Posterior vena cava (tissue), 2 donors: ENCODE measurements at regions of chr4 and their contacts with region 1.

Region 1: GRCh38 chr4:170202721-170203120 is 113.0 kb upstream of the AADAT start:
- DNase-seq: no peak

Region 2: DNA sequence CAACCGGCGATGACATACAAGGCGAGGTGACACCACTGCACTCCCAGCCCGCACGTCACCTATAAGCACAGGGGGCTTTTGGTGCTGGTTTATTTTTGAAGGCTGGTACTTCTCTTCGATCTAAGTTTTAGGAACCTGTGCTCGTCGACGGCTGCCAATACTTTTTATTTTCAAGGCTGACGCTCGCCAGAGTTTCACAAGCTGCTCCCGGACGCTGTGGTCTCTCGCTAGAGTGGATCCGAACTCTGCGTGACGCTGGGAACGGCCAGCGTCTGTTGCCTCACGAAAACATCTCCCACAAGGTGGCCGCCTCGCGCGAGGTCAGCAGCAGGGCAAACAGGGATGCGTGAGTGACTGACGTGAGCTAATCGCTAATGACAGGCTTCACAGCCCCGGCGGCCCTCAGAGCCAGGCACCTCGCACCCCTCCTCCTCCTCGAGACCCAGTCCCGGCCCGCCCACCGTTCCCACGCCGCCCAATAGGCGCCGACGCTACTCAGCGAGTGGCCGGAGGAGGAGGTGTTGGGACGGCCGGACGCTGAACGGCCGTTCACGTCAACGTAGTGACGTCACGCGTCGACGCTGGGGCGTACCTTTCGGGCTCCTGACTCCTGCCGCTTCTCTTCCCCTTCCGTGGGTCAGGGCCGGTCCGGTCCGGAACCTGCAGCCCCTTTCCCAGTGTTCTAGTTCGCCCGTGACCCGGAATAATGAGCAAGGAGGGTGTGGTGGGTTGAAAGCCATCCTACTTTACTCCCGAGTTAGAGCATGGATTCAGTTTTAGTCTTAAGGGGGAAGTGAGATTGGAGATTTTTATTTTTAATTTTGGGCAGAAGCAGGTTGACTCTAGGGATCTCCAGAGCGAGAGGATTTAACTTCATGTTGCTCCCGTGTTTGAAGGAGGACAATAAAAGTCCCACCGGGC is 582.5 kb before region 1 on chr4 and contains the start of gene CLCN3:
- intact Hi-C with region 1: no loop called
- DNase-seq: peak; percentile 99
- total RNA-seq, gene CLCN3: 17.0 to 23.3 TPM

Region 3: GRCh38 chr4:170325599-170325998 is 122.9 kb after region 1 on chr4:
- intact Hi-C with region 1: no loop called
- DNase-seq: no peak

Region 4: GRCh38 chr4:170374770-170375169 is 172.0 kb after region 1 on chr4:
- intact Hi-C with region 1: no loop called
- DNase-seq: no peak

Region 5: DNA sequence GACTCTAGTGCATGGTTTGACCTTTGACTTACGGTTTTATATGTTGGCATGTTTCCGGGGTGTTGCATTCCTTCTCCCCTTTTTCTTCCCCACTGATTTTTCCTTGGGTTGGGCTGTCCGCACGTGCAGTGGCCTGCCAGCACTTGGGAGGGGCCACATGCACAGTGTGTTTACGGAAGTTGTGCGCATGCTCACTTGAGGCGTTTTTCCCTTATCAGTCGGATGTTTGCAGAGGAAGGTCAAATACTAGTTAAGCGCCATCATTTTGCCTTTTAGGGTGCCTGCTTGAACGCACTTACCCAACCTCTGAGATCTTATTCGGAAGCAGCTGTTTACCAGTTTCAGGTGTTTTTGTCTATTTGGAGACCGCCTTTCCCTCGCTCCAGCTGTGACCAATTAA is 540.9 kb after region 1 on chr4:
- intact Hi-C with region 1: loop called in 1 of 2 experiments (anchors 10 kb)
- DNase-seq: peak; percentile 44